GM18951 (cell line): ENCODE measurements at regions of chr2 and their contacts with region 1.

Region 1: DNA sequence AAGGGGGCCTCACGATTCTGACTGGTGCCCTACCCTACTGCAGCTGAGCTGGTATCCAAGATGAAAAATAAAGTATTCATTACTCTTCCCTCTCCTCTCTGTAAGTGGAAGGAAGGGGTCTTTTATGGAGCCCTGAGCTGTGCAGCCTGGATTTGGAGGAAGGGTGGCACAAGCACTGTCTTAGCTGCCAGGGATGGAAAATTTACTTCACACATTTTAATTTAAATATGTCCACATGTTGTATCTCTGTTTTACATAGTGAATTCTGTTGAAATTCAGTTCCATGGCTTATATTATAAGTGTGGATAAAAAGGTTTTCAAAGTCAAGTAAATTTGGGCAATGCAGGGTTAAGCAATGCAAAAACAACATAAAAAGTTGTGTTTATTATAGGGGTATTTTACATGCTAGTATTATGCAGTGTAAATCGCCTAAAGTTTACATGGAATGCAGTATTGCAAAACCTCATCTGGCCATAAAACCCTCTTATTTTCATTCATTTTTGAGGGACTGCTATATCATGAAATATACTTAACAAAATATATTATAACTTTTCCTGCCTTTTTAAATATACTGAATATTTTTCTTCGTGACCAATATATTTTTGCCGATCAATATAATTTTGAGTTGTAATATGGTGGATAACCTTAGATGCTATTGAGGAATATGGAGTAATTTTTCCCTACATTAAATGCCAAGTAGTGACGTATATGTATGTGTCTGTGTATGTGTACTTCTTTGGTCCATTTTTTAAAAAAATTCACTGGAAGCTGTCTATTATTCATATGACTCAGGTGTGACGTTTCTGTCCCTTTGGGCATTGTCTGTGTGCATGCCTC is 333.9 kb upstream of the CYRIA start:
- POLR2A ChIP-seq: no peak

Region 2: GRCh38 chr2:16882706-16883105 is 116.9 kb before region 1 on chr2:
- in situ Hi-C with region 1: no loop called
- POLR2A ChIP-seq: no peak

Region 3: DNA sequence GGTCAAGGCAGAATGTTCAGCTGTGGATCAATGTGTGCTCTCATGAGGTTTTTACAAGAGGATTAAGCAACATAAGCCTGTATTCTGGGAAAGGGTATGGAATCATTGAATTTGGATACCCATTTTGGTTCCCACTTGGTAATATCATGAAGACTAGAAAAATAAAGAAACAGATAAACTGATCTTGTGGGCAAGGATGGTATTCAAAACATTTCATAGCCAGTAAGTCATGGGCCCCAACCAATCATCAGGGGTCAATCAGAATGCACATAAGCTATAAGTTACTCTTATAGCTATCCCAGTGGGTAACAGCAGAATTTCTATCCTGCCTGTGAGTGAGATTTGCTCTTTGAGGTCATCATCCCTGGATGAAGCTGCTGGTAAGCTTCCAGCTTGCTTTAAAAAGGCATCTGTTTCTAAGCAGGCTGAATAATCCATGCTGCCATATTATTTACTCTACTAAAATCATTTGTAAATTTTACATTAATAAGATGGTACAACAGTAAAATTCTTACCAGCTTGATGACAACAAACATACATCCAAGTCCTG is 227.5 kb after region 1 on chr2:
- in situ Hi-C with region 1: loop called (anchors 5 kb)
- POLR2A ChIP-seq: no peak